ENCODE measurements at regions of chr20 and their contacts with region 1.

Region 1: GRCh38 chr20:58309575-58310290 is at the start of gene RAB22A:
- DNase-seq: peak; percentile 90
- ATAC-seq: peak; percentile 70
- H3K4me3 Mint-ChIP-seq: peak within 1 kb of the TSS; percentile 96
- H3K27ac Mint-ChIP-seq: peak within 1 kb of the TSS; percentile 92
- H3K4me1 Mint-ChIP-seq: peaks cover 41% of the 10 kb centered on the region
- H3K27me3 Mint-ChIP-seq: no peaks in the 10 kb centered on the region
- total RNA-seq, gene RAB22A: 17.3 to 18.5 TPM

Region 2: GRCh38 chr20:58078741-58079522 is 230.8 kb before region 1 on chr20:
- POLR2A ChIA-PET with region 1: no interaction called
- DNase-seq: no peak
- ATAC-seq: no peak
- H3K4me3 Mint-ChIP-seq: no peak overlapping the region
- H3K27ac Mint-ChIP-seq: no peak overlapping the region
- H3K4me1 Mint-ChIP-seq: peaks cover 5% of the 10 kb centered on the region
- H3K27me3 Mint-ChIP-seq: peaks cover 5% of the 10 kb centered on the region

Region 3: GRCh38 chr20:58352468-58352867 is 42.7 kb after region 1 on chr20:
- POLR2A ChIA-PET with region 1: no interaction called
- DNase-seq: no peak
- ATAC-seq: no peak
- H3K4me3 Mint-ChIP-seq: no peak overlapping the region
- H3K27ac Mint-ChIP-seq: no peak overlapping the region
- H3K4me1 Mint-ChIP-seq: no peaks in the 10 kb centered on the region
- H3K27me3 Mint-ChIP-seq: no peaks in the 10 kb centered on the region

Region 4: GRCh38 chr20:58388882-58389323 is 79.2 kb after region 1 on chr20 and contains the start of gene VAPB:
- POLR2A ChIA-PET with region 1: interaction called, 17 read pairs
- DNase-seq: peak; percentile 99
- ATAC-seq: peak; percentile 98
- H3K4me3 Mint-ChIP-seq: peak within 1 kb of the TSS; percentile 94
- H3K27ac Mint-ChIP-seq: peak within 1 kb of the TSS; percentile 90
- H3K4me1 Mint-ChIP-seq: peaks cover 29% of the 10 kb centered on the region
- H3K27me3 Mint-ChIP-seq: peaks cover 3% of the 10 kb centered on the region
- total RNA-seq, gene VAPB: 32.8 to 35.6 TPM

Region 5: DNA sequence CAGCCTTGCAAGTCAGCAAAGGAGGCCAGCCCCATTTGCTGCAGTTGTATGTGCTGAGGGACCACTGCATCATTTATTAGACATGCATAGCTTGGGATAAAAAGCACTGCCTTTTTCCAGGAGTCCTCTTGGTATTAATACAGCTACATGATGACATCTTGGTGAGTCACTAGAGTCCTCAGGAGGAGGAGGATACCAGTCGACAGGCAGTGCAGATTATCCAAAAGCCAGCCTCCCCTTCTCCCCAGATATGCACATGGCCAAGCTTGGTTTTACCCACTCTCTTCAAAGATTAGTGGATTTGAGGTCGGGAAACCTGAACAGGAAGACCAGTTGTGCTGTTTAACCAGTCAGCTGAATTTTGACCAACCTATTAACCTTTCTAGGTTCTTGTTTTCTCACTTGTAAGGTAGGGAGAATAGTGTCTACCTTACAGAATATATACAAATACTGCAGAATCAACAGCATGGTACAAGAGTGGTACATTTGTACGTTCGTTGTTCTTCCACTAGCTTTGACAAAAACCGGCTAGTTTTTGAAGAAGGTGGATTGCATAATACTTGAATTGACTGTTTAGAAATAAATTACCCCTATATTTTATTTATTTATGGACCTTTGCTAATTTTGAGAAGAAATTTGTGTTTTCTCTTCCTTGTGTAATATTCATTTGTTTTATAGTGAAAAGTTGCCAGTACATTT is 111.2 kb after region 1 on chr20:
- POLR2A ChIA-PET with region 1: no interaction called
- DNase-seq: no peak
- ATAC-seq: no peak
- H3K4me3 Mint-ChIP-seq: no peak overlapping the region
- H3K27ac Mint-ChIP-seq: no peak overlapping the region
- H3K4me1 Mint-ChIP-seq: peaks cover 14% of the 10 kb centered on the region
- H3K27me3 Mint-ChIP-seq: no peaks in the 10 kb centered on the region

Measured in activated naive CD8-positive, alpha-beta T cell treated with anti-CD3 and anti-CD28 coated beads, Interleukin-2, amount 10 ng/mL, durations not matched to agents 7 days and 5 days (primary cell).